ENCODE measurements at regions of chr14 and their contacts with region 1.

Region 1: GRCh38 chr14:94080471-94081289 is at the start of gene DDX24:
- DNase-seq: peak; percentile 98 to 99
- ATAC-seq: peak; percentile 96 to 99 (median 96)
- H3K4me3 ChIP-seq: peak within 1 kb of the TSS; percentile 78
- H3K4me3 Mint-ChIP-seq: peak within 1 kb of the TSS; percentile 100
- H3K27ac ChIP-seq: peak within 1 kb of the TSS; percentile 85
- H3K27ac Mint-ChIP-seq: peak within 1 kb of the TSS; percentile 97 to 98
- H3K4me1 ChIP-seq: peaks cover 24% of the 10 kb centered on the region
- H3K4me1 Mint-ChIP-seq: peaks cover 38 to 58% of the 10 kb centered on the region in 2 donors
- H3K27me3 ChIP-seq: no peaks in the 10 kb centered on the region
- H3K27me3 Mint-ChIP-seq: no peaks in the 10 kb centered on the region
- CTCF ChIP-seq: no peak
- total RNA-seq, gene DDX24: 250 to 357 (median 296) TPM

Region 2: GRCh38 chr14:93959239-93960107 is 121.2 kb before region 1 on chr14:
- intact Hi-C with region 1: loop called (anchors 5 kb)
- DNase-seq: peak; percentile 86 to 96
- ATAC-seq: peak; percentile 64 to 86 (median 80)
- H3K4me3 ChIP-seq: no peak overlapping the region
- H3K4me3 Mint-ChIP-seq: peak overlapping the region; percentile 81
- H3K27ac ChIP-seq: peak overlapping the region; percentile 81
- H3K27ac Mint-ChIP-seq: peak overlapping the region; percentile 95 to 97
- H3K4me1 ChIP-seq: peaks cover 98% of the 10 kb centered on the region
- H3K4me1 Mint-ChIP-seq: peaks cover 90 to 98% of the 10 kb centered on the region in 2 donors
- H3K27me3 ChIP-seq: no peaks in the 10 kb centered on the region
- H3K27me3 Mint-ChIP-seq: no peaks in the 10 kb centered on the region
- CTCF ChIP-seq: no peak

Region 3: DNA sequence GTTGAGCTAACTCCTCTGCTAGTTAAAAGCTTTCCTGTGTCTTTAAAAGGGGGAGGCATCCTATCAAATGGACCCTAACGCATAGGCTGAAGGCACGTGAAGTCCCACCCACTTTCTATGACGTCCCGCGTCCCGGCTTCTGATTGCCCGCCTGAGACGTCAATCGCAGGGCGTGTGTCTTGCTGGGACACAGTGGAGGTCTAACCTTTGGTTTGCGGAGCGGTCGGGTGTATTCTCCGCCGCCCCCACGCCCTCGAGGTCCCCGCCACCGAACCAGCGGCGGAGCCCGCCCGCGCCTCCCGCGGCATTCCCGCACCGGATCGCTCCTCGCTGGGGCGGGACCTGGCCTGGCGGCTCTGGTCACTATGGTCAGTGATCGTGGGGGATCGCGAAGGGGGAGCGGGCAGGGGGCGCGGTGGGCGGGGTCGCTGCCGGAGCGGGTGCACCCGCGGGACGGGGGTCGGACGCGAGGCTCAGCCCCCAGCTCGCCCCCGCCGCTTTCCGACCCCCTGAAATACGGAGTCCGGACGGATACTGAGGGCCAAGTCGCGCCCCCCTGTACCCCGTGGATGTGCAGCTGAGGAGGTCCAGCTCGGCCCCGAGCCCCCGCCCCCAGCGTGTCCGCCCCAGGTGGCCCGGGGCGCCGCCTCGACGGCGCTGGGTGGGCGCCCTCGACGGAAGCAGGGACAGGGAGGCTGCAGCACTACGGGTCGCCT is 54.3 kb before region 1 on chr14 and contains the start of gene OTUB2:
- intact Hi-C with region 1: loop called (anchors 1 kb)
- DNase-seq: peak; percentile 96 to 98
- ATAC-seq: peak; percentile 100
- H3K4me3 ChIP-seq: peak within 1 kb of the TSS; percentile 22
- H3K4me3 Mint-ChIP-seq: peak within 1 kb of the TSS; percentile 80
- H3K27ac ChIP-seq: no peak within 1 kb of the TSS
- H3K27ac Mint-ChIP-seq: peak within 1 kb of the TSS in 1 of 2 donors; percentile 64
- H3K4me1 ChIP-seq: peaks cover 12% of the 10 kb centered on the region
- H3K4me1 Mint-ChIP-seq: peaks cover 6 to 9% of the 10 kb centered on the region in 2 donors
- H3K27me3 ChIP-seq: no peaks in the 10 kb centered on the region
- H3K27me3 Mint-ChIP-seq: peaks cover 23 to 31% of the 10 kb centered on the region in 2 donors
- CTCF ChIP-seq: no peak
- total RNA-seq, gene OTUB2: 0.09 to 0.13 TPM in 2 of 3 donors, not detected in the other

Region 4: GRCh38 chr14:94056579-94057308 is 23.9 kb before region 1 on chr14:
- intact Hi-C with region 1: loop called (anchors 2 kb)
- DNase-seq: peak in 1 of 2 donors; percentile 55
- ATAC-seq: peak; percentile 77 to 83 (median 78)
- H3K4me3 ChIP-seq: no peak overlapping the region
- H3K4me3 Mint-ChIP-seq: peak overlapping the region; percentile 76
- H3K27ac ChIP-seq: peak overlapping the region; percentile 63
- H3K27ac Mint-ChIP-seq: peak overlapping the region; percentile 82 to 87
- H3K4me1 ChIP-seq: peaks cover 26% of the 10 kb centered on the region
- H3K4me1 Mint-ChIP-seq: peaks cover 51 to 59% of the 10 kb centered on the region in 2 donors
- H3K27me3 ChIP-seq: no peaks in the 10 kb centered on the region
- H3K27me3 Mint-ChIP-seq: no peaks in the 10 kb centered on the region
- CTCF ChIP-seq: no peak

Region 5: GRCh38 chr14:94129111-94129757 is 48.6 kb after region 1 on chr14 and contains the start of gene IFI27L2:
- intact Hi-C with region 1: loop called (anchors 2 kb)
- DNase-seq: peak; percentile 49 to 83
- ATAC-seq: peak; percentile 93
- H3K4me3 ChIP-seq: peak within 1 kb of the TSS; percentile 59
- H3K4me3 Mint-ChIP-seq: peak within 1 kb of the TSS; percentile 91
- H3K27ac ChIP-seq: peak within 1 kb of the TSS; percentile 49
- H3K27ac Mint-ChIP-seq: peak within 1 kb of the TSS; percentile 76 to 91
- H3K4me1 ChIP-seq: peaks cover 14% of the 10 kb centered on the region
- H3K4me1 Mint-ChIP-seq: peaks cover 21 to 22% of the 10 kb centered on the region in 2 donors
- H3K27me3 ChIP-seq: peaks cover 2% of the 10 kb centered on the region
- H3K27me3 Mint-ChIP-seq: peaks cover 7 to 16% of the 10 kb centered on the region in 2 donors
- CTCF ChIP-seq: no peak
- total RNA-seq, gene IFI27L2: 36.3 to 55.1 (median 39.8) TPM

Measured in natural killer cell (primary cell).